Caco-2 (cell line): ENCODE measurements at regions of chr18 and their contacts with region 1.

Region 1: DNA sequence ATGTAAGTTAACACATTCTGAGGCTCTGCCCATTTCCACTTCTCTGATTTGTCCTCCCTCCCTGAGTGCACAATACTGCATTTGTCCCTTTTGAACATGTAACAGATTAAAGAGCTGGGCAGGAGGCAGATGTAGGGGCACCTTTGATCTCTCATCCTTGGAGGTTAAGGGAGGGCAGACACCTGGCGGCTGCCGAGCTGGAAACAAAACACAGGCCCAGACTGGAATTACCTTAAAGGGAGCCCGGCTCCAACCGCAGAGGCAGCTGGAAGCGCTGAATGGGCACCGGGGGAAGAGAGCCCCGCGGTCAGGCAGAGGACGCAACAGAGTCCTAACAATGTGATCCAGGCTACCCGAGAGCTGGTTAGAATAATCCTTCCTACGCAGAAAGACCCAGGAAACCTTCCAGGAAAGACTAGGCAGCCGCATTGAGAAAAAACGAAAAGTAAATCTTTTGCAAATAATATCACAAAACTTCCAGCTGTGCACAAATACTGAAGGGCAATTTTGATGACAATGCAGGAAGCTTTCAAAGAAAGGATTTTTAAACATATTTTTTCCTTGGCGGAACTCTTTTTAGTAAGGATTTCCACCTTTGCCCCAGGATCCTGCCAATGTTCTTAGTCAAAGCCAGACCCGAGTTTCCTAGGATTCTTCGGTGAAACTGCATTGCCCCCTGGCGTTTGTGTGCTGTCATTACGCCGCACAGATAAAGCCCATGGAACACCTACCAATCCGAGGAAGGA is 216.0 kb downstream of the TGIF1 start:
- DNase-seq: peak; percentile 90 to 91
- H3K4me3 ChIP-seq: peak overlapping the region; percentile 2; the same call in 1 of the 2 replicates
- H3K4me3 Mint-ChIP-seq: peak overlapping the region; percentile 73
- H3K27ac Mint-ChIP-seq: peak overlapping the region; percentile 82
- H3K4me1 ChIP-seq: peaks cover 26% of the 10 kb centered on the region
- H3K4me1 Mint-ChIP-seq: peaks cover 33% of the 10 kb centered on the region
- H3K27me3 ChIP-seq: no peaks in the 10 kb centered on the region
- H3K27me3 Mint-ChIP-seq: no peaks in the 10 kb centered on the region
- CTCF ChIP-seq: peak; percentile 82 to 90

Region 2: GRCh38 chr18:3281456-3282400 is 384.2 kb before region 1 on chr18:
- CTCF ChIA-PET with region 1: interaction called, 27 read pairs
- POLR2A ChIA-PET with region 1: interaction called, 3 read pairs
- intact Hi-C with region 1: no loop called
- DNase-seq: peak in 1 of 2 experiments; percentile 78
- H3K4me3 ChIP-seq: no peak overlapping the region
- H3K4me3 Mint-ChIP-seq: no peak overlapping the region
- H3K27ac Mint-ChIP-seq: no peak overlapping the region
- H3K4me1 ChIP-seq: no peaks in the 10 kb centered on the region
- H3K4me1 Mint-ChIP-seq: peaks cover 13% of the 10 kb centered on the region
- H3K27me3 ChIP-seq: no peaks in the 10 kb centered on the region
- H3K27me3 Mint-ChIP-seq: no peaks in the 10 kb centered on the region
- CTCF ChIP-seq: peak; percentile 33 to 66

Region 3: DNA sequence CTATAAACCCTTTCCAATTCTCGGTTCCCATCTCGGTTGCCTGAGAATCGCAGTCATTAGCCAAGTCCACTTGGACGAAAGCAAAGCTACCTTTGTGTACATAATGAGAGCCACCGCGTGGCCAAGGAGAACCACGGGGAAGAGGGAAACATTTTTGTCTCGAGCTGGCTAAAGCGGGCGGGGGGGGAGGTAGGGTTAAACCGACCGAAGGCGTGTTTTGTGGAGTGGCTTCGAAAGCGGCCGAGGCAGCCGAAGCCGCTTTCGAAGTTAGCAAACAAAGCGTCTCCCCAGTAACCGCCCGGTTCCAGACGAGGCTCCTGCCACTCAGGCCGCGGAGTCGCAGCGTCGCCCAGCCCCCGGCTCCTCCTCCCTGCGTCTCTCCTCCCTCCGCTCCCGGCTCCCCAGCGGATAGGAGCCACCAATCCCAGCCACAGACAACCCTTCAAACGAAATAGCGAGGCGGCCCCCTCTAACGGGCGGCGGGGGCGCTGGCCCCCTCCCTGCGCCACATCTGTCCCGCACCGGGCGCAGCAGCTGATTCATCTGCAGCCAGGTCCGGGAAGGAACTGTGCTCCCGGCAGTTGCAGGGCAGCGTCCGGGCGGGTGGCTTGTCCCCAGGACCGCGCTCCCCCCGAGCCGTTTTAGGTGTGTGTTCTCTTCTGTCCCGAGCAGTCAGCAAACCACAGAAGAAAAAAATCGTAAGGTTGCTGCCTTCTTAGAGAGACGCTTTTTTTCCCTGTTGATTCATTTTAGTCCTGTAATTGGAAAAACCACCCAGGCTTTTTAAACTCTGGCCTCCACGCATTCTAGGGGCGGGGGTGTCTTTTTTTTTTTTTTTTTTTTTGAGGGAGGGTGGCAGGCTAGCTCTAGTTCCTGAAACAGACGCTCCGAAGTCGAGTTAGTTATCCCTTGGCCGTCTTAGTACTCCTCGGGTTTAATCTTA is 217.8 kb before region 1 on chr18:
- CTCF ChIA-PET with region 1: interaction called, 7 read pairs
- POLR2A ChIA-PET with region 1: interaction called, 22 read pairs
- intact Hi-C with region 1: loop called (anchors 2 kb)
- DNase-seq: peak; percentile 97
- H3K4me3 ChIP-seq: peak overlapping the region; percentile 60
- H3K4me3 Mint-ChIP-seq: peak overlapping the region; percentile 87
- H3K27ac Mint-ChIP-seq: peak overlapping the region; percentile 97
- H3K4me1 ChIP-seq: peaks cover 14% of the 10 kb centered on the region
- H3K4me1 Mint-ChIP-seq: no peaks in the 10 kb centered on the region
- H3K27me3 ChIP-seq: no peaks in the 10 kb centered on the region
- H3K27me3 Mint-ChIP-seq: no peaks in the 10 kb centered on the region
- CTCF ChIP-seq: peak in 1 of 2 experiments; percentile 48

Region 4: GRCh38 chr18:3593904-3594661 is 71.9 kb before region 1 on chr18:
- CTCF ChIA-PET with region 1: interaction called, 72 read pairs
- POLR2A ChIA-PET with region 1: interaction called, 21 read pairs
- intact Hi-C with region 1: loop called (anchors 1 kb)
- DNase-seq: peak; percentile 89 to 90
- H3K4me3 ChIP-seq: peak overlapping the region; percentile 39
- H3K4me3 Mint-ChIP-seq: peak overlapping the region; percentile 85
- H3K27ac Mint-ChIP-seq: peak overlapping the region; percentile 87
- H3K4me1 ChIP-seq: peaks cover 47% of the 10 kb centered on the region
- H3K4me1 Mint-ChIP-seq: peaks cover 47% of the 10 kb centered on the region
- H3K27me3 ChIP-seq: no peaks in the 10 kb centered on the region
- H3K27me3 Mint-ChIP-seq: no peaks in the 10 kb centered on the region
- CTCF ChIP-seq: peak; percentile 85 to 93

Region 5: DNA sequence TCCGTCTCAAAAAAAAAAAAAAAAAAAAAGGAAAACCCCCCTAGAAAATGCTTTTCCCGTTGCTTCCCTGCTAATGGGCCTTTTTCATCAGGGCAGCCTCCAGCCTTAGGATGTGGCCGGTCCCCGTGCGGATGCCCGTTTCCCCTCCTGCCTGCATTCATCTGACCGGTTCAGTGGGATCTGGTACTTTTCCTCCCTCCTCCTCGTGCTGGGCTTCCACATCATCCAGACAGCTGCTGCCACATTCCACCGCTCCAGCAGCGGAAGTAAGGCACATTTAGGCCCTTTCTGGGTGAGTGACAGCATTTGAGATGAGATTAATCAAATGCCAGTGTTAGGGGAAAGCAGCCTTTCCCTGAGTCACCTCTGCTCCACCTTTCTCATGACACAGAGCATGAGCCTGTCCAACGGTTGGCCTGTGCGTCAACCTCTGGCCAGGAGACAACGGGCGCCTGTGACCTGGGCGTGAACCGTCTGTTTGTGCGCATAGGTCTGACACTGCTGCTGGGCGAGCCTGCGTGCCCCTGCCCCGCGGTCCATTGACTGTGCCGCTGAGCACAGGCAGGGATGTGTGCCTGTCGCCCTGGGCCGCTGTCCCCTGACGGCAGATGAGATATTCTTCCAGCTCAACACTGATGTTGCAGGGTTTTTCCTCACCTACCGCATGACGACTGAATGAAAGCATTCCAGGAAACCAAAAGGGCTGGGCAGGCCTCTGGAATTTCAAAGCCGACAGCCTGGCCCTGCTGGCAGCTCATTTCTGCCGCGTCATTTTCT is 42.0 kb before region 1 on chr18:
- CTCF ChIA-PET with region 1: interaction called, 11 read pairs
- POLR2A ChIA-PET with region 1: interaction called, 34 read pairs
- intact Hi-C with region 1: loop called (anchors 1 kb)
- DNase-seq: peak; percentile 90 to 93
- H3K4me3 ChIP-seq: peak overlapping the region; percentile 17
- H3K4me3 Mint-ChIP-seq: peak overlapping the region; percentile 97
- H3K27ac Mint-ChIP-seq: peak overlapping the region; percentile 99
- H3K4me1 ChIP-seq: peaks cover 62% of the 10 kb centered on the region
- H3K4me1 Mint-ChIP-seq: peaks cover 50% of the 10 kb centered on the region
- H3K27me3 ChIP-seq: no peaks in the 10 kb centered on the region
- H3K27me3 Mint-ChIP-seq: peaks cover 2% of the 10 kb centered on the region
- CTCF ChIP-seq: no peak

Region 6: GRCh38 chr18:3703732-3704176 is 37.8 kb after region 1 on chr18:
- CTCF ChIA-PET with region 1: no interaction called
- POLR2A ChIA-PET with region 1: no interaction called
- intact Hi-C with region 1: no loop called
- DNase-seq: peak; percentile 67 to 76
- H3K4me3 ChIP-seq: no peak overlapping the region
- H3K4me3 Mint-ChIP-seq: no peak overlapping the region
- H3K27ac Mint-ChIP-seq: no peak overlapping the region
- H3K4me1 ChIP-seq: no peaks in the 10 kb centered on the region
- H3K4me1 Mint-ChIP-seq: peaks cover 17% of the 10 kb centered on the region
- H3K27me3 ChIP-seq: no peaks in the 10 kb centered on the region
- H3K27me3 Mint-ChIP-seq: no peaks in the 10 kb centered on the region
- CTCF ChIP-seq: peak; percentile 81 to 88

Region 7: GRCh38 chr18:3771121-3771971 is 105.4 kb after region 1 on chr18:
- CTCF ChIA-PET with region 1: interaction called, 11 read pairs
- POLR2A ChIA-PET with region 1: no interaction called
- intact Hi-C with region 1: no loop called
- DNase-seq: peak; percentile 77 to 93
- H3K4me3 ChIP-seq: peak overlapping the region; percentile 30
- H3K4me3 Mint-ChIP-seq: peak overlapping the region; percentile 65
- H3K27ac Mint-ChIP-seq: no peak overlapping the region
- H3K4me1 ChIP-seq: peaks cover 25% of the 10 kb centered on the region
- H3K4me1 Mint-ChIP-seq: peaks cover 17% of the 10 kb centered on the region
- H3K27me3 ChIP-seq: no peaks in the 10 kb centered on the region
- H3K27me3 Mint-ChIP-seq: no peaks in the 10 kb centered on the region
- CTCF ChIP-seq: peak; percentile 91 to 92

Region 8: DNA sequence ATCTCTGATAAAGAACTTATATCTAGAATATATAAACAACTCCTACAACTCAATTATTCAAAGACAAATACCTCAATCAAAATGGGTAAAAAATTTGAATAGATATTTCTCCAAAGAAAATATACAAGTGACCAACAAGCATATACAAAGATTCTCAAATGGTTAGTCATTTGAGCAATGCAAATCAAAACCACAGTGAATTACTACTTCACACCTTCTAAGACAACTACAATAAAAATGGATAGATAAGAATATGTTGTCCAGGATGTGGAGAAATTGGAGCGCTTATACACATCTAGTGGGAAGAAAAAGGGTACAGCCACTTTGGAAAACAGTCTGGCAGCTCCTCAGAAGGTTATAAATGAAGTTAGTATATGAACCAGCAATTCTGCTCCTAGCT is 116.9 kb after region 1 on chr18:
- CTCF ChIA-PET with region 1: no interaction called
- POLR2A ChIA-PET with region 1: no interaction called
- intact Hi-C with region 1: no loop called
- DNase-seq: no peak
- H3K4me3 ChIP-seq: no peak overlapping the region
- H3K4me3 Mint-ChIP-seq: no peak overlapping the region
- H3K27ac Mint-ChIP-seq: no peak overlapping the region
- H3K4me1 ChIP-seq: no peaks in the 10 kb centered on the region
- H3K4me1 Mint-ChIP-seq: no peaks in the 10 kb centered on the region
- H3K27me3 ChIP-seq: no peaks in the 10 kb centered on the region
- H3K27me3 Mint-ChIP-seq: no peaks in the 10 kb centered on the region
- CTCF ChIP-seq: no peak

Region 9: DNA sequence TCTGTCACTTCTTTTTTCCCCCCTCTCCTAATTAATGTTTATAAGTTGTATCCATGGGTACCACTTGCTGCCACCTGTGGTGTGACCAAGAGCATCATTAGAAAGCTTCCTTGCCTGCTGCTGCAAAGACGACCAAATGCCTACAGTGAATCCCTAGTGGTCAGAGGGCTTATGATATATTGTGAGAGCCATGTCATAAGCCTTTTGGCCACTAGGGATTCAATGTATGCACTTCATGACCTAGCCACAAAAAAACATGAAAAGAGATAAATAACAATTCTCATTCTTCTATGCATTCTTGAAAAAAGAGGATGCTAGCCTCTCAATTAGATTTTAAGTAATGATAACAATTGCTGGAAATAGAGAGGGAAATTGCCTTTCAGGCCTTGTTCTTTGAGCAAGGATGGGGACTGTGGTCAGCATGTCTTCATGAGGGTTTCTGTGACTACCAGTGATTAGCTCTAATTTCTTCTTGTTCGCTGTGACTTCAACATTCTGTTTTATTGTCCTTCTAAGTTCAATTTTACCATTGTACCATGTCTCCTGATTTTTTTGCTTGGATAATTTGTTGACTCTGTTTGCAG is 219.3 kb after region 1 on chr18:
- CTCF ChIA-PET with region 1: no interaction called
- POLR2A ChIA-PET with region 1: no interaction called
- intact Hi-C with region 1: no loop called
- DNase-seq: peak in 1 of 2 experiments; percentile 25
- H3K4me3 ChIP-seq: no peak overlapping the region
- H3K4me3 Mint-ChIP-seq: no peak overlapping the region
- H3K27ac Mint-ChIP-seq: no peak overlapping the region
- H3K4me1 ChIP-seq: peaks cover 19% of the 10 kb centered on the region
- H3K4me1 Mint-ChIP-seq: peaks cover 20% of the 10 kb centered on the region
- H3K27me3 ChIP-seq: no peaks in the 10 kb centered on the region
- H3K27me3 Mint-ChIP-seq: no peaks in the 10 kb centered on the region
- CTCF ChIP-seq: peak; percentile 33 to 48

Region 10: DNA sequence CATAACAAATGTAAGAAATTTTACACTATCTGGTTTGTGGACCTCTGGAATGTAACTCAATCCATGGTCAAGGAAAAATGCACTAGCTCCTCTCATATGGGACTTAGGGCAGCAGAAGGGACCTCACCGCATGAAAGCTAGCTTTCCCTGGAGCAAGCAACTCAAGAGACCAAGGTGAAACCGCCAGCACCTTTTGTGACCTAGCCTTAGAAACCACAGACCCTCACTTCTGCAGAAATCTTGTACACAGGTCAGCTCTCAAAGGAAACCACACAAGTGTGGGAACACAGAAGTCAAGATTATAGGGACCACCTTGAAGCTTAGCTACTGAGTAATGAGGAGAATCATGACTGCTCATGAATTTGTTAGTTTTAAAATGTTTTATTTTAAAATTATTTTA is 566.7 kb after region 1 on chr18:
- CTCF ChIA-PET with region 1: no interaction called
- POLR2A ChIA-PET with region 1: no interaction called
- intact Hi-C with region 1: no loop called
- DNase-seq: no peak
- H3K4me3 ChIP-seq: no peak overlapping the region
- H3K4me3 Mint-ChIP-seq: no peak overlapping the region
- H3K27ac Mint-ChIP-seq: no peak overlapping the region
- H3K4me1 ChIP-seq: no peaks in the 10 kb centered on the region
- H3K4me1 Mint-ChIP-seq: no peaks in the 10 kb centered on the region
- H3K27me3 ChIP-seq: no peaks in the 10 kb centered on the region
- H3K27me3 Mint-ChIP-seq: peaks cover 15% of the 10 kb centered on the region
- CTCF ChIP-seq: no peak